PC-9 (cell line): ENCODE measurements at regions of chr12 and their contacts with region 1.

Region 1: DNA sequence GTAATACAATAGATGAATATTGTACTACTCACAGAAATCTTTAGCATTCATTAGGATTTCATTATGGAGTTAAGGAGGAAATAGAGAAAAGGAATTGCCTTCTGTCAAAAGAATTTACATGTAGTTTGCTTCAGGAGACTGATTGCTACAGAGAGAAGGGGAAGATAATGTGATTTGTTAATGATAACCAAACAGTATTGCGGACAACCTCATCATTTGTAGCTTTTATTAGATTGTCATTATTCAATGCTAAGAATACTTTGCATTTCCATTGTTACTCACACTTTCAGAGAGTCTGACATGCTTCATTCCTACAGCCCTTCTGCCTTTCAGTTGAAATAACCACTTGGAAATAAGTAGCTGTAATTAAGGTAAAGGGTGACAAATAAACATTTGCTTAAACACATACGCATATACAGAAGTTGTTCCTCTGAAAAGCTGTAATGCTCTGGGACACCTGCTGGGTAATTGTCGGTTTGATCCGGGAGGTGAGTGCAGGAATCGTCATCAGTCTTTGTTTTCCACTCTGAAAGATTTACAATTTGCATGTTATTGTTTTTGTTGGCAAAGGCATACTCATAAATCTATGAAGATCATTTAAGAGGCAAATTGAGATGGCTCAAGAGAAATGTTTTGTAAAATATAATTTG is 600.2 kb downstream of the TRHDE start:
- DNase-seq: no peak
- H3K4me3 ChIP-seq: no peak overlapping the region
- H3K27ac ChIP-seq: no peak overlapping the region
- H3K4me1 ChIP-seq: no peaks in the 10 kb centered on the region
- H3K27me3 ChIP-seq: no peaks in the 10 kb centered on the region
- CTCF ChIP-seq: no peak

Region 2: DNA sequence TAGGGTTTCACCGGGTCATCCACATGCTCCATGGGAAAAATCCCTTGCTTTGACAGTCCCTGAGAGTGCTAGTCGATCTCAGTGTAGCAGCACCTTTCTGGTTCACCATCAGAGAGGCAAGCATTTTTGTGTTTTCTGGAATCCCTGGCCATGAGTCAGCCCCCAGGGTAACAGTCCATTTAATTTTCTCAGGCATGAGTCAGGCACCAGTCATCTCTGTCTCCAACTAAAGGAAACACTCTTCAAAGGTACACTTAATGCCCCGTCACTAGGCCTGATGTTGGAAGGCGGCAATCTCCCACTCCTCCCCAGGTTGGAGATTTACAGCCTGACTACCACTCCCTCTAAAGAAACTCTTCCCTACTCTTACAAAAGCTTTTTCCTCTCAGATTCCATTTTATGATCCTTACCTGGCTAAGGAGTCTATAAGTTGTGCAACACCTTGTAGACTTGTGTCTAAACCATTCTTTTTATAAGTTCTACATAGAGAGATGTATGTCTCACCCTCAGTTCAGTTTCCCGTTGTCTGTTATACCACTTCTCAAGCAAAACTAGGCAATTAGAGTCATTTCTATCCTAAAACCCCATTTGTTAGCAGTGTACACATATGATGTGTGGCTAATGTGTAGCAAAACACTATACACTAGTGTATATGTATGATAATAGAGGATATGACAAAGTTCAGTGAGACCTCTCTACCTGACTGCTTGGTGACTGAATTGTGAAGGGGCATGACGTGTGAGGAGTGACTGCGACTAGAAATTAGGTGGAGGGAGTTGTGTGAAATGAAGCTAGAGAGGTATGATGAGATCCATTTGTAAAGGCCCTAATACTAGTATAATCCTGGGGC is 1161.9 kb before region 1 on chr12:
- CTCF ChIA-PET with region 1: no interaction called
- POLR2A ChIA-PET with region 1: no interaction called
- intact Hi-C with region 1: loop called (anchors 10 kb)
- DNase-seq: peak; percentile 66 to 90
- H3K4me3 ChIP-seq: 0 out of 2 replicates have a peak overlapping the region, but pooled peaks have one; percentile 4
- H3K27ac ChIP-seq: peak overlapping the region; percentile 93
- H3K4me1 ChIP-seq: peaks cover 21% of the 10 kb centered on the region
- H3K27me3 ChIP-seq: no peaks in the 10 kb centered on the region
- CTCF ChIP-seq: no peak

Region 3: GRCh38 chr12:71810905-71811304 is 1061.5 kb before region 1 on chr12:
- CTCF ChIA-PET with region 1: no interaction called
- POLR2A ChIA-PET with region 1: no interaction called
- intact Hi-C with region 1: no loop called
- DNase-seq: peak in 1 of 2 experiments; percentile 73
- H3K4me3 ChIP-seq: no peak overlapping the region
- H3K27ac ChIP-seq: no peak overlapping the region
- H3K4me1 ChIP-seq: peaks cover 14% of the 10 kb centered on the region
- H3K27me3 ChIP-seq: no peaks in the 10 kb centered on the region
- CTCF ChIP-seq: no peak